G401 (cell line): ENCODE measurements at regions of chr9 and their contacts with region 1.

Region 1: DNA sequence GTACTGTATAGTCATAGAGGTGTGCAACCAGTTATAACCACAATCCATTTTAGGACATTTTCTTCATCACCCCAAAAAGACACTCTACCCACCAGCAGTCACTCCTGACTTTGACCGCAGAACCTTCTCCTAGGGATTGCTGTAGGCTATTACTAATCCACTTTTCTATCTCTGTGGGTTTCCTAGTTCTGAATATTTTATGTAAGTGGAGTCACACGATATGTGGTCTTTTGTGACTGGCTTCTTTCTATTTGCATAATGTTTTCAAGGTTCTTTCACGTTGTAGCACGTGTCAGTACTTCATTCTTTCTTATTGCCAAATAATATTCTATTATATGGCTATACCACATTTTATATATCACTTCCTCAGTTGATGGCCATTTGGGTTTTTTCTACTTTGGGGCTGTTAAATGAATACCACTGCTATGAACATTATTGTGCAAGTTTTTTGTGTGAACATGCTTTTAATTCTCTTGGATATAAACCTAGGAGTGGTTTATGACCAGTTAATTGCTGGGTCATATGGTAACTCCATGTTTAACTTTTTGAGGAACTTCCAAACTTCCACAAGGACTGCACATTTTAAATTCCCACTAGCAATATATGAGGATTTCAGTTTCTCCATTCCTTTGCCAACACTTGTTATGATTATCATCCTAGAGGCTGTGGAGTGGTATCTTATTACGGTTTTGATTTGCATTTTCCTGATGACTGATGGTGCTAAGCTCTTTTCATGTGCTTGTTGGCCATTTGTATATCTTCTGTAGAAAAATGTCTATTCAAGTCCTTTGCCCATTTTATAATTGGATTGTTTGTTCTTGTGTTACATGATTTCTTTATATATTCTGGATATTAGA is 37.8 kb downstream of the MRRF start:
- DNase-seq: no peak

Region 2: GRCh38 chr9:122234022-122234748 is 68.3 kb before region 1 on chr9:
- in situ Hi-C with region 1: loop called (anchors 5 kb)
- DNase-seq: no peak